Right ventricle myocardium inferior (tissue), 1 donor: ENCODE measurements at regions of chr5 and their contacts with region 1.

Region 1: DNA sequence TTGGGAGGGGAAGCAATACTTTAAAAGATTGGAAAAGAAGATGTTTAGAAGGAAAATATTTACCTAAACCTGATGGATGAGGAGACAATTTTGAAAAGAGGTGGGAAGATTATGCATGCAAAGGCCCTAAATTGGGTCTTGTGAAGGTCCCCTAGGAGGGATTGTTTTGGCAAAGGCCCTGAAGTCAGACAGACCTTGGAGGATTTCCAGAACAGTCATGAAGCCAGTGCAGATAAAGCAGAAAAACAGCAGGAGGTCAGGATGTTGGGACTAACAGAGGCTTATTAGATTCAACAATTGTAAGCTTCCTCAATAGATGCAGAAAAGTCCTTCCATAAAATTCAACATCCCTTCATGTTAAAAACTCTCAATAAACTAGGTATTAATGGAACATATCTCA is 361.0 kb upstream of the CDH6 start:
- DNase-seq: no peak
- ATAC-seq: peak; percentile 23

Region 2: DNA sequence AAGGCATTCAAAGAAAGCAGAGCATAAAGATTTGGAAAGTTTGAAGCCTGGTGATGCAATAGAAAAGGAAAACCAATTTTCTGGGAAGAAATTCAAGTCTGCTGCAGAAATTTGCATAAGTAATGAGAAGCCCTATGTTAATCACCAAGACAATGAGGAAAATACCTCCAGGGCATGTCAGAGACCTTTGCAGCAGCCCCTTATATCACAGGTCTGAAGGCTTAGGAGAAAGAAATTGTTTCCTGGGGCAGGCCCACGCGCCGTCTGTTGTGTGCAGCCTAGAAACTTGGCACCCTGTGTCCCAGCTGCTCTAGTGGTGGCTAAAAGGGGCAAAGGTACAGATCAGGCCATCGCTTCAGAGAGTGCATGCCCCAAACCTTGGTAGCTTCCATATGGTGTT is 134.3 kb before region 1 on chr5:
- intact Hi-C with region 1: no loop called
- DNase-seq: peak; percentile 46
- ATAC-seq: no peak

Region 3: GRCh38 chr5:30781643-30782042 is 50.9 kb before region 1 on chr5:
- intact Hi-C with region 1: no loop called
- DNase-seq: no peak
- ATAC-seq: no peak

Region 4: DNA sequence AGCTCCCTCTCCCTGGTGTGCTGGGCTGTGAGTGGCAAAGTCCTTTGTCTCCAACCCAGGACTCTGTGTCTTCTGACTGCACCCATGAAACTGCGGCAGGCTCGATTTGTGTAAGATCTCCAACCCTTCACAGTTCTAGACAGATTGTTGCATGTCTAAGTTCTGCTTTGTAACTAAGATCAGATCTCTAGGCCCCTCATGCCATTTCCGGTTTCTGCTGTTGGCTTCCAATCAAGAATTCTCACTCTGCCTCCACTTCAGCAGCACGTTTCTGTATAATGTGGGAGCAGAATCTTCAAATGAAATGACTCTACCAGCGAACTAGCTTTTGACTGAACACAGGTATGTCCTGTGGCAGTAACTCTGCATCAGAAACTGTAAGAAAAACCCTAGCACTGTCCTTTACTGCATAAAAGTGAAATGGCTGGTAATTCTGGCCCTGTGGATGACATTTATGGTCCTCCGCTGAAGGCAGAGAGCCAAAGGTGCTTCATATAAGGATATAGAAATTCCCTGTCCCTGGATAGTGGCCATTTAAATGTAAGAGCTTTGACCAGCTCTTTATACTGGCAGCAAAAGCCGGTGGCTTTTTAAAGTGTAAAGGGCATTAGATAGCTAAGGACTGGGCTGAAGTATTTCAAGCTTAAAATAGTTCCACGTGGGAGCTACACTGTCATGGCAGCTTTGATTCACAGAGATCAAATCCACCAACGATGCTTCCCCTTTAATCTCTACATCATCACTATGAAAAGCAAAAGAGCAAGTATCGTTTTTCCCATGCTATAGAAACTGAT is 41.9 kb after region 1 on chr5:
- intact Hi-C with region 1: loop called (anchors 5 kb)
- DNase-seq: no peak
- ATAC-seq: peak; percentile 72

Region 5: GRCh38 chr5:30928956-30929355 is 96.4 kb after region 1 on chr5:
- intact Hi-C with region 1: loop called (anchors 10 kb)
- DNase-seq: no peak
- ATAC-seq: no peak

Region 6: DNA sequence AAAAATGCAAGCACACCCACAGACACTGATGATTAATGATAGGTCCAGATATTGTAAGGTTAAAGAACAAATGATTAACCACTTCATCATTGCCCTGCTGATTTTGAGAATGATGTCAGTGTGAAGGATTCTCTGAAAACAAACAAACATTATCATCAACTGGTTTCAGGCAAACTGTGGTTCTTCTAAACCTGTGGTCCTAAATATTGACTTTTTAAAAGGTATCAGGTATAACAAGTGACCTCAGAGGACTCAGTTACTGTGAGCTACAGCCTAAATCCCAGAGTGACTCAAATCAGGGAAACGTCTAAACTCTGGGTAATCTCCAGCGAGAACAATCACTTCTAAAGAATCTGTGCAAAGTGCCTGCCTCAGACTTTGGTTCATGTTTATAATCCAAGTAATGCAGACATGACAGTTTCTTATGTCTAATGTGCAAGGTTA is 188.7 kb after region 1 on chr5:
- intact Hi-C with region 1: loop called (anchors 10 kb)
- DNase-seq: no peak
- ATAC-seq: no peak

Region 7: DNA sequence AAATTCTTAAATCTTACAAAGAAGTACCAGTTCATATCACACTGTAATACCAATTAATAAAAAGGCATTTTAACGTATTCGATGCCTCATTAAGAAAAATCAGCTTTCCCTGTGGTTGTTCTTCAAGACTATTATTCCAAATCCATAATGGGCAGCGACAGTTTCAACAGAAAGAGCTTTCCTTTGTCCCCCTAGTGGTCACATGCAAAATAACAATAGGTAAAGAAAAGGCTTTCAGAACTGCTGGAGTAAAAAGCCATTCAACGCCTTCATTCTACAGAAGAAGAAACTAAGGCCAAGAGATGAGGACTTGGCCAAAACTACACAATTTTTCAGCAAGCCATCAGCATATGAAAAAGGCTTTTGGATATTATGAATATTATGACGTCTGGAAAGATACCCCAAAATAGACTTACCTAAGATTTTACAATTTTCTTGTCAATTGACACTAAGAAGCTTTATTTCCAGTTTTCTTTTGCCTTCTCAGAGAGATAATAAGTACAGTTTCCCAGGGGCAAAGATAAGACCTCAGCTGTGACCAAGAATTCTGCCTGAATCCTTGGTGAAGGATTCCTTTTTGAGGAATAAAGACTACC is 354.3 kb after region 1 on chr5:
- intact Hi-C with region 1: loop called (anchors 10 kb)
- DNase-seq: no peak
- ATAC-seq: no peak